ENCODE measurements at regions of chrX and their contacts with region 1.

Region 1: GRCh38 chrX:86066997-86067396 is 19.6 kb upstream of the CHM start:
- DNase-seq: peak; percentile 9
- ATAC-seq: no peak
- H3K4me3 ChIP-seq: no peak overlapping the region
- H3K4me3 Mint-ChIP-seq: no peak overlapping the region
- H3K27ac ChIP-seq: no peak overlapping the region
- H3K27ac Mint-ChIP-seq: no peak overlapping the region
- H3K4me1 ChIP-seq: no peaks in the 10 kb centered on the region
- H3K4me1 Mint-ChIP-seq: no peaks in the 10 kb centered on the region
- H3K27me3 ChIP-seq: no peaks in the 10 kb centered on the region
- H3K27me3 Mint-ChIP-seq: no peaks in the 10 kb centered on the region
- CTCF ChIP-seq: no peak

Region 2: DNA sequence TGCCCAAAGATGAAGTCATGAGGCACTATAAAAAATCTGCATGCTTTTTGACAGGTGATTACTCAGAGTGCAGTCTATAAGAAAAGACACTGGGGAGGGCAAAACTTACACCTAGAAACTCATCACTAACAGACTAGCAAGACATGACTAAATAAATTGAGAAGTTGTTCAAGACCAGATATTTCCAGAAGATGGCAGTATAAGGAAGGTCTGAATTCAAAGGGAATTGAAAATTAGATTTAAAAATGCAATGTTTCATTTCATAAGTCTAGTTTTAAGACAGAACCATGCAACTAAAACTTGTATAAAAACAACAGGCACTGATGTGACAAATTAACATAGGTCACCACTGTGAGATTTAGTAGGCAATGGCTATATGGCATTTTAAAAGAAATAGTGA is 455.1 kb before region 1 on chrX:
- CTCF ChIA-PET with region 1: no interaction called
- POLR2A ChIA-PET with region 1: no interaction called
- intact Hi-C with region 1: loop called (anchors 10 kb)
- DNase-seq: peak; percentile 3
- ATAC-seq: no peak
- H3K4me3 ChIP-seq: no peak overlapping the region
- H3K4me3 Mint-ChIP-seq: no peak overlapping the region
- H3K27ac ChIP-seq: no peak overlapping the region
- H3K27ac Mint-ChIP-seq: no peak overlapping the region
- H3K4me1 ChIP-seq: no peaks in the 10 kb centered on the region
- H3K4me1 Mint-ChIP-seq: no peaks in the 10 kb centered on the region
- H3K27me3 ChIP-seq: no peaks in the 10 kb centered on the region
- H3K27me3 Mint-ChIP-seq: no peaks in the 10 kb centered on the region
- CTCF ChIP-seq: peak; percentile 24

Measured in B cell (primary cell).